ENCODE measurements at regions of chr1 and their contacts with region 1.

Region 1: DNA sequence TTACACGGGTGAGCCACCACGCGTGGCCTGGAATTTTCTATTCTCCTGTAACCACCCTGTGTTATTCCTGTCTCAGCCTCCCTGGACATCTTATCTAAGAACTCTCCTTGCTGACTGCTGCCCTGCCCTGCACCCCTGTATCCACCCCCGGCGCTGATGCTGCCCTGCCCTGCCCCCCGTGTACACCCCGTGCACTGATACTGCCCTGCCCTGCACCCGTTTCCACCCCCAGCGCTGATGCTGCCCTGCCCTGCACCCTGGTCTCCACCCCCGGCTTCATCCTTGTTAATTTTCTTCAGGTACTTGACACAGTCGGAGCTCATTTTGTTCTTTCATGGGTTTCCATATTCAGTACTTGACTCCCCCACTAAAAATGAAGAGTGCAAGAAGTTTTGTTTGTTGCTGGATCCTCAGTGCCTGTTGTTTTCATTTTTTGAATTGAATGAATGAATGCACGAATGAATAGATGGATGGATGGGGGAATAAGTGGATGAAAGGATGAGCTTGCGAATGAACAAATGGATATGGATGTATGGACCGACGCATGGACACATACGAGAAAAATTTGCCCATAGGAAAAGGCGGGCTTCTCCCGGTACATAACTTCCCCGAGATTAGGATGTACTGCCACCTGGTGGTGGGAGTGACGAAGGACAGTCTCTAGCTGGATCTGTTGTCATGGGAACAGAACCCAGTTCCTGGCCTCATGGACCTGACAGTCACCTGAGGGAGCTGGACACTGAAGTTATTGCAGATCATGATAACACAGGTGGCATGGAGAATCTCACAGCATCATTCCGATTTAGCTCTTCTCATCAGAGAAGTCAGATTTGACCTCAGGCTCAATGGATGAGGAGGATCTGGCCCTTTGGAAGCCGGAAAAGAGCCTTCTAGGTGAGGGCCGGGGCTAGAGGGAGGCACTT is 14.9 kb downstream of the AADACL4 start:
- DNase-seq: peak; percentile 57 to 75 (median 70)
- H3K4me3 ChIP-seq: no peak overlapping the region
- H3K4me3 Mint-ChIP-seq: no peak overlapping the region
- H3K27ac ChIP-seq: no peak overlapping the region
- H3K27ac Mint-ChIP-seq: peak overlapping the region in 1 of 7 donors; percentile 40
- H3K4me1 ChIP-seq: peaks cover 8 to 11% of the 10 kb centered on the region in 2 donors
- H3K4me1 Mint-ChIP-seq: peaks cover 10% of the 10 kb centered on the region
- H3K27me3 ChIP-seq: no peaks in the 10 kb centered on the region
- H3K27me3 Mint-ChIP-seq: peaks cover 5 to 8% (median 7%) of the 10 kb centered on the region in 3 donors
- CTCF ChIP-seq: peak; percentile 91

Region 2: GRCh38 chr1:12114916-12115315 is 543.9 kb before region 1 on chr1:
- intact Hi-C with region 1: loop called in 1 of 2 experiments (anchors 5 kb)
- DNase-seq: no peak
- H3K4me3 ChIP-seq: no peak overlapping the region
- H3K4me3 Mint-ChIP-seq: no peak overlapping the region
- H3K27ac ChIP-seq: no peak overlapping the region
- H3K27ac Mint-ChIP-seq: no peak overlapping the region
- H3K4me1 ChIP-seq: no peaks in the 10 kb centered on the region
- H3K4me1 Mint-ChIP-seq: no peaks in the 10 kb centered on the region
- H3K27me3 ChIP-seq: no peaks in the 10 kb centered on the region
- H3K27me3 Mint-ChIP-seq: peaks cover 3 to 4% (median 3%) of the 10 kb centered on the region in 3 donors
- CTCF ChIP-seq: no peak

Region 3: GRCh38 chr1:12275369-12275768 is 383.4 kb before region 1 on chr1:
- intact Hi-C with region 1: loop called in 1 of 2 experiments (anchors 2 kb)
- DNase-seq: no peak
- H3K4me3 ChIP-seq: no peak overlapping the region
- H3K4me3 Mint-ChIP-seq: no peak overlapping the region
- H3K27ac ChIP-seq: no peak overlapping the region
- H3K27ac Mint-ChIP-seq: peak overlapping the region in 1 of 7 donors; percentile 4
- H3K4me1 ChIP-seq: no peaks in the 10 kb centered on the region
- H3K4me1 Mint-ChIP-seq: no peaks in the 10 kb centered on the region
- H3K27me3 ChIP-seq: no peaks in the 10 kb centered on the region
- H3K27me3 Mint-ChIP-seq: no peaks in the 10 kb centered on the region
- CTCF ChIP-seq: peak; percentile 48

Region 4: GRCh38 chr1:12314333-12314903 is 344.4 kb before region 1 on chr1:
- intact Hi-C with region 1: loop called (anchors 2 kb)
- DNase-seq: peak in 1 of 3 donors; percentile 20
- H3K4me3 ChIP-seq: no peak overlapping the region
- H3K4me3 Mint-ChIP-seq: no peak overlapping the region
- H3K27ac ChIP-seq: no peak overlapping the region
- H3K27ac Mint-ChIP-seq: no peak overlapping the region
- H3K4me1 ChIP-seq: no peaks in the 10 kb centered on the region
- H3K4me1 Mint-ChIP-seq: peaks cover 6% of the 10 kb centered on the region
- H3K27me3 ChIP-seq: no peaks in the 10 kb centered on the region
- H3K27me3 Mint-ChIP-seq: no peaks in the 10 kb centered on the region
- CTCF ChIP-seq: peak; percentile 76